ENCODE measurements at regions of chr15 and their contacts with region 1.

Region 1: DNA sequence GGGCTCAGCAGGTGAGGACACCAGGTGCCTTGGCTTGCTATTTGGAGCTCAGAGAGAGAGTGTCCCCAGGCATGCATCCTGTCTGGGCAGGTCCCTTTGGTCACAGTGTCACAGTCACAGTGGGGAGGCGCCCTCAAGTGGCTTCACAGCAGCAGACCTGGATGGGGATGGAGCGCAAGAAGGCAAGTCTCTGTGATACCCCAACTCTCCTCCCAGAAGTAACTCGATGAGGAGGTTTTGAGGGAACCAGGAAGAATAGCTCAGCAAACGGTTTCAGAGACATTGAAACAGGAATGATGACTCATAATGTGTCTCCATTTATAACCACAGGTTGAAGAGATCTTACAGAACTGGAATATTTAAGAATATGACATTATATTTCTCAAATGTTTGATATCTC is 66.5 kb upstream of the SH3GL3 start:
- DNase-seq: peak; percentile 69
- ATAC-seq: peak; percentile 78
- H3K4me3 ChIP-seq: peak overlapping the region in 1 of 2 experiments; percentile 61; a peak in 2 of 4 replicates
- H3K27ac ChIP-seq: peak overlapping the region; percentile 51
- H3K4me1 ChIP-seq: peaks cover 18 to 39% of the 10 kb centered on the region in 2 experiments
- H3K27me3 ChIP-seq: no peaks in the 10 kb centered on the region
- CTCF ChIP-seq: peak; percentile 65 to 77 (median 73); a peak in 5 of 6 replicates
- POLR2A ChIP-seq: no peak
- RAD21 ChIP-seq: peak; percentile 93

Region 2: DNA sequence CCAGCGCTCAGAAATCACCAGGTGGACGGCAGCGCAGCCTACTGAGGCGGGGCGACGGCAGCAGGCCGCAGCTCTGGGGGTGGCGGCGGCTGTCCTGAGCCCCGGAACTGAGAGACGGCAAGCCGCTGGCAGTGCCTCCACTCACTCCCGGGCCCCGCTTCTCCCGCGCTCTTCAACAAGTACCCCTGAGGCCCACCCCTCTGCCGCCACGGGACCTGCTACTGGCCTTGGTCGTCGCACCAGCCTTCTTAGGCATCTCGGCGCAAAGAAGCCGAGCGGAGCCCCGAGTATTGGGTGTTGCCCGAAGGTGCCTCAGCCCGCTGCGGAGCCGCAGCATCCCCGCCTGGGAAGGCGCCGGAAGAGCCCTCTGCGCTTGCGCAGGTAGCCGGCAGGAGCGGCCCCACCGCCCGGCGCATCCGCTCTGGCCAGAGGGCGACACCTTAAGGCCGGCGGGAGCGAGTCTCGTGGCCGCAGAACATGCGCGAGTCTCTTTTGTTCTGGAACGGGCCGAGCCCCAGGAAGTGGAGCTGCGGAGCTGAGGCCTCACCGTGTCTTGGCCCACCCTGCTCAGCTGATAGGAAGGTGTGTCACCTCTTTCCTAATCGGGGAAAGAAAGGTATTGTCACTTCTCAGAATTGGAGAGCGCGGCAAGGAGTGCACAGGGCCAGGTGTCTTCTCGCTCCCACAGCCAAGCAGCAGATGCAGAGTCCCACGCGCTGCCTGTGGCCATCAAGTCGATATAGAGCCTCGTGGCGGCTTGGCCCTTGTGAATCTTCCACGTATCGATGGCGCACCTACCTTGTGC is 369.2 kb before region 1 on chr15 and contains the start of gene C15orf40:
- CTCF ChIA-PET with region 1: interaction called, 4 read pairs
- POLR2A ChIA-PET with region 1: no interaction called
- RAD21 ChIA-PET with region 1: no interaction called
- intact Hi-C with region 1: loop called (anchors 5 kb)
- DNase-seq: peak; percentile 76
- ATAC-seq: peak; percentile 90
- H3K4me3 ChIP-seq: peak within 1 kb of the TSS; percentile 87 to 98
- H3K27ac ChIP-seq: peak within 1 kb of the TSS; percentile 63
- H3K4me1 ChIP-seq: peaks cover 7 to 18% of the 10 kb centered on the region in 2 experiments; a peak in 3 of 4 replicates
- H3K27me3 ChIP-seq: no peaks in the 10 kb centered on the region
- CTCF ChIP-seq: peak; percentile 66 to 69 (median 68); a peak in 5 of 6 replicates
- POLR2A ChIP-seq: peak; percentile 39
- RAD21 ChIP-seq: no peak
- total RNA-seq, gene C15orf40: 26.0 TPM

Region 3: GRCh38 chr15:84006421-84006820 is 625.7 kb after region 1 on chr15:
- CTCF ChIA-PET with region 1: no interaction called
- POLR2A ChIA-PET with region 1: no interaction called
- RAD21 ChIA-PET with region 1: no interaction called
- intact Hi-C with region 1: no loop called
- DNase-seq: no peak
- ATAC-seq: no peak
- H3K4me3 ChIP-seq: no peak overlapping the region
- H3K27ac ChIP-seq: no peak overlapping the region
- H3K4me1 ChIP-seq: no peaks in the 10 kb centered on the region
- H3K27me3 ChIP-seq: peaks cover 11% of the 10 kb centered on the region; the same call in 1 of the 2 replicates
- CTCF ChIP-seq: no peak
- POLR2A ChIP-seq: no peak
- RAD21 ChIP-seq: no peak